ENCODE measurements at regions of chr6 and their contacts with region 1.

Region 1: GRCh38 chr6:7615611-7616383 is 25.8 kb downstream of the SNRNP48 start:
- DNase-seq: no peak
- H3K4me3 ChIP-seq: no peak overlapping the region
- H3K27me3 ChIP-seq: no peaks in the 10 kb centered on the region
- CTCF ChIP-seq: peak; percentile 72

Region 2: GRCh38 chr6:7424967-7425807 is 190.6 kb before region 1 on chr6:
- CTCF ChIA-PET with region 1: interaction called, 13 read pairs
- POLR2A ChIA-PET with region 1: no interaction called
- DNase-seq: no peak
- H3K4me3 ChIP-seq: no peak overlapping the region
- H3K27me3 ChIP-seq: no peaks in the 10 kb centered on the region
- CTCF ChIP-seq: peak; percentile 45

Measured in BJ (cell line).